Esophagus squamous epithelium (tissue), 5 donors: ENCODE measurements at regions of chr5 and their contacts with region 1.

Region 1: DNA sequence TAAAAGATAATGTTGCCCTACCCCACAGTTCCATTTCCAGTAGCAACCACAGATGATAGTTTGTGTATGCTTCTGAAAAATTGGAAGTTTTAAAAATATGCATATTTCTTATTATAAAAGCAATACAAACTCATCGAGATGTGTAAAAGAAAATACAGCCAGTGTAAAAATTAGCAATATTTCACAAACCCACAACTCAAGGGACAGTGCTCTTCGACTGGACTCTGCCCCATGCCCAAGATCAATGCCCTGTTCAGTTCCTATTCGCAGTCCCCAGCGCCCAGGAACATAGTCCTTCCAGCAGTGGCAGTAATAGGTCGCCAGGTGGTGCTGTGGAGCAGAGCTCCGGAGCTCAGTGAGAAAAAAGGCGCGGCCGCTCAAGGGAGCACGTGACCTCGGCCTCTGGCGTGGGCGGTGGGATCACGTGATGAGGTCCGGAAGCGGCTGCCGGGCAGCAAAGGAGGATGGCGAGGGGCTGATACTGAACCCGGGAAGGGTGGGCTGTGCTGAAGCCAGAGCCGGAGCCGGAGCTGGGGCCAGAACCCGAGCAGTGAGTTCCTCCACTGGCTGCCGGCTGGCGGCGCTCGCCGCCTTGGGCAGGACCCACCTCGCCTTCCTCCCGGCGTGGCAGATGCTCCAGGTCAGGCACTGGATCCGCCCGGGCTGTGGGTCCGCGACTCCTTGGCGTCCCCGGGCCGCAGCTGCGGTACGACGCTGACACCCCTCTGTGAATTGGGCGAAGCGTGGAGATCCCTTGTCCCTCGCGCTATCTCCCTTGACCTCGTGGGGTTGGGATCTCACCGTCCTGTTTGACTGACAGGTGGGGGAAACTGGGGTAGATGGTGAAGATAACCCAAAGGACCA is at the start of gene SLC36A1:
- DNase-seq: peak; percentile 66
- H3K4me3 ChIP-seq: peak within 1 kb of the TSS; percentile 57 to 84 (median 80)
- H3K27ac ChIP-seq: peak within 1 kb of the TSS; percentile 57 to 86 (median 82)
- H3K4me1 ChIP-seq: peaks cover 0 to 19% (median 8%) of the 10 kb centered on the region in 3 donors
- H3K27me3 ChIP-seq: no peaks in the 10 kb centered on the region
- CTCF ChIP-seq: peak; percentile 96 to 99 (median 98)
- POLR2A ChIP-seq: peak in 2 of 4 donors; percentile 36 to 55
- total RNA-seq, gene SLC36A1: 7.3 to 9.1 (median 8.3) TPM

Region 2: GRCh38 chr5:151499501-151500035 is 52.2 kb after region 1 on chr5:
- intact Hi-C with region 1: loop called (anchors 5 kb)
- DNase-seq: no peak
- H3K4me3 ChIP-seq: no peak overlapping the region
- H3K27ac ChIP-seq: no peak overlapping the region
- H3K4me1 ChIP-seq: peaks cover 0 to 36% (median 0%) of the 10 kb centered on the region in 3 donors
- H3K27me3 ChIP-seq: no peaks in the 10 kb centered on the region
- CTCF ChIP-seq: no peak
- POLR2A ChIP-seq: no peak

Region 3: DNA sequence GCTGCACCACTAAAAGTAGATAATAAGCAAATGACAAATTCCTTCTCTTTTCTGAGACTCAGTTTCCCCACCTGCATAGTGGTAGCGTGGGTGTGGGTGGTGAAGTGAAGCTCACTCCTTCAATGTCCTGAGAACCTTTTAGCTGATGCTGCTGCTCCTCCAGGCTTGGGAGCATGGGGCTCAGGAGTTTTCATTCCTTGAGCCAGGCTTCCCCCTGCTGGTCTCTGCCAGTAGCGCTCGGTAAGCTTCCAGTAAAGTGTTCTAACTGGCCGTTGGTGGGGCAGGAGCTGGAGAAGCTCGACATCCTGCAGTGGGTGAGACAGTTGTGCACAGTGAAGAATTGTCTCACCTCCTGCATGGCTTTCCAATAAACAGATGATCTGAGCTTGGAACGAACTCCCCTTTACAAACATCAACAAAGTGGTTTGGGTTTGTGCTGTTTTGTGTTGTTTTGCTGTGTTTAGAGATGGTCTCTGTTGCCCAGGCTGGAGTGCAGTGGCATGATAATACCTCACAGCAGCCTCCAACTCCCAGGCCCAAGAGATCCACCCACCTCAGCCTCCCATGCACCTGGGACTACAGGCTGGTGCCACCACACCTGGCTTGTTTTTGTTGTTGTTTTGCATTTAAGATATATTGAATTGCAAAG is 204.7 kb after region 1 on chr5:
- intact Hi-C with region 1: loop called (anchors 5 kb)
- DNase-seq: no peak
- H3K4me3 ChIP-seq: no peak overlapping the region
- H3K27ac ChIP-seq: no peak overlapping the region
- H3K4me1 ChIP-seq: peaks cover 6 to 41% (median 17%) of the 10 kb centered on the region in 3 donors
- H3K27me3 ChIP-seq: no peaks in the 10 kb centered on the region
- CTCF ChIP-seq: peak; percentile 52 to 95 (median 84)
- POLR2A ChIP-seq: no peak

Region 4: GRCh38 chr5:151740336-151740942 is 293.0 kb after region 1 on chr5:
- intact Hi-C with region 1: loop called (anchors 10 kb)
- DNase-seq: no peak
- H3K4me3 ChIP-seq: peak overlapping the region in 1 of 4 donors; percentile 10
- H3K27ac ChIP-seq: peak overlapping the region; percentile 51 to 80 (median 68)
- H3K4me1 ChIP-seq: peaks cover 16 to 48% (median 28%) of the 10 kb centered on the region in 3 donors
- H3K27me3 ChIP-seq: no peaks in the 10 kb centered on the region
- CTCF ChIP-seq: peak; percentile 78 to 93 (median 88)
- POLR2A ChIP-seq: no peak